ENCODE measurements at regions of chr18 and their contacts with region 1.

Region 1: DNA sequence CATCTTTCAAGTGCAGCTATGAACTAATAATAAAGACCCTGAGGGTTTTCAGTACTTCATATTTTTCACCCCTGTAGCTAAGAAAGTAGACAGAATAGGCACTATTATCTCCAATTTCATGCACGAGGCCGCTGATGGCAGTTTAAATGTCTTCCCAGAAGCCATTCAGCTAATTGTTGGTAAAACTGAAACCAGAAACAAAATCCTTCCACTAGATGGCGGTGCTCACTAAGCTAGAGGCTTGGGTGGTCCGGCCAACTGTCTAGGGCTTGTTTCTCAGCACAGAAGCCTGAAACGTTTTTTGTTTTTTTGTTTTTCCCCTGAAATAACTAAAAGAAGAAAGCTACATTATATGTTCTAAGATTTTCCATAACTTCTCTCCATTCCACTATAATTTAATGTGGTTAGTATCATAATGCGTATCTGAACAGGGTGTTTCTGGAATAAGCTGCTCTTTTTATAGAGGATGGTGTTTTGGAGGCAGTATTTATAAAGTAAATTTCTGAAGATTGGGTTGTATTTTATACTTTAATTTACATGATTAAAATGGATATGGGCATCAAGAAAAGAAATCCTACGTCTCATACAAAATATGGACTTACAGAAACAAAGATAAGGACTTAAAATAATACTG is 159.4 kb downstream of the PIK3C3 start:
- DNase-seq: peak; percentile 70
- H3K4me3 Mint-ChIP-seq: no peak overlapping the region
- H3K27ac Mint-ChIP-seq: peak overlapping the region; percentile 83
- H3K4me1 Mint-ChIP-seq: peaks cover 27% of the 10 kb centered on the region
- H3K27me3 Mint-ChIP-seq: no peaks in the 10 kb centered on the region
- CTCF ChIP-seq: peak; percentile 78

Region 2: GRCh38 chr18:42274488-42275137 is 160.2 kb after region 1 on chr18:
- CTCF ChIA-PET with region 1: no interaction called
- intact Hi-C with region 1: loop called (anchors 2 kb)
- DNase-seq: no peak
- H3K4me3 Mint-ChIP-seq: no peak overlapping the region
- H3K27ac Mint-ChIP-seq: no peak overlapping the region
- H3K4me1 Mint-ChIP-seq: no peaks in the 10 kb centered on the region
- H3K27me3 Mint-ChIP-seq: no peaks in the 10 kb centered on the region
- CTCF ChIP-seq: no peak

Region 3: DNA sequence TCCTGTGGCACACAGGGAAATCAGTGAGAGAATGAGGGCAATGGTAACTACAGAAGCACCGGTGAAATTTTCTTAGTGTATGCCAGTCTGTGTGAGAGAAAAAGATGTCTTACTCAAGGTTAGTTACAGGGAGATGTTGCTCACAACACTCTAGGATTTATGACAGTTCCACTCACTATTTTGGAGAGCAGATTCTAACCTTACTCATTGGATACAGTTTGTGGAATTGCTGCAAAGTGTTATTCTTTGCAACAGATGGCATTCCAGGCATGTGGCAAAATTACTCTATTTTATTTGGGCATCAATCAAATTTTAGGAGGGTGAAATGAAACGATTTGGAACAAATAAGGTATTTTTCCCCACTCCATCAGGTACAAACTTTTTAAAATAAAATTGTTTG is 289.7 kb after region 1 on chr18:
- CTCF ChIA-PET with region 1: no interaction called
- intact Hi-C with region 1: no loop called
- DNase-seq: no peak
- H3K4me3 Mint-ChIP-seq: no peak overlapping the region
- H3K27ac Mint-ChIP-seq: no peak overlapping the region
- H3K4me1 Mint-ChIP-seq: no peaks in the 10 kb centered on the region
- H3K27me3 Mint-ChIP-seq: no peaks in the 10 kb centered on the region
- CTCF ChIP-seq: no peak

Region 4: GRCh38 chr18:43271593-43272432 is 1157.4 kb after region 1 on chr18:
- CTCF ChIA-PET with region 1: interaction called, 5 read pairs
- intact Hi-C with region 1: loop called (anchors 1 kb)
- DNase-seq: peak; percentile 46
- H3K4me3 Mint-ChIP-seq: no peak overlapping the region
- H3K27ac Mint-ChIP-seq: no peak overlapping the region
- H3K4me1 Mint-ChIP-seq: no peaks in the 10 kb centered on the region
- H3K27me3 Mint-ChIP-seq: peaks cover 13% of the 10 kb centered on the region
- CTCF ChIP-seq: peak; percentile 57

Region 5: DNA sequence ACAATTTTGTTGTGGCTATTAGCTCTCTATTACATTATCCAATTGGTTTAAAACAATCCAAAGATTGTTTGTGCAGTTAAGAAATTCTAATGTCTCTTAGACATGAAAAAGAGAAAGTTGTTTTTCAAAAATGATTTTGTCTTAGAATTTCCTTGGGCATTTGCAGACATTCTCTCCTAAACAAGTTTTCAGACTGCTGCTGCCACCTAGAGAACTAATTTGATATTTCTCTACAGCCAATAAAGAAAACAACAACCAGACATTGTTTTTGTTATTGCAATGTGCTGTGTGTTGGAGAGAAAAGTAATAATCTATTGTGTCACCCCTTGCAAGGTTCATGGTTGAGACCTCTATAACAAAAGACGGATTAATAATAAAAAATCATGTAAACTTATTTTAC is 1281.8 kb after region 1 on chr18:
- CTCF ChIA-PET with region 1: no interaction called
- intact Hi-C with region 1: loop called (anchors 1 kb)
- DNase-seq: no peak
- H3K4me3 Mint-ChIP-seq: no peak overlapping the region
- H3K27ac Mint-ChIP-seq: no peak overlapping the region
- H3K4me1 Mint-ChIP-seq: no peaks in the 10 kb centered on the region
- H3K27me3 Mint-ChIP-seq: no peaks in the 10 kb centered on the region
- CTCF ChIP-seq: no peak

Region 6: GRCh38 chr18:43563780-43564179 is 1449.4 kb after region 1 on chr18:
- CTCF ChIA-PET with region 1: no interaction called
- intact Hi-C with region 1: loop called (anchors 10 kb)
- DNase-seq: peak; percentile 51
- H3K4me3 Mint-ChIP-seq: no peak overlapping the region
- H3K27ac Mint-ChIP-seq: no peak overlapping the region
- H3K4me1 Mint-ChIP-seq: peaks cover 10% of the 10 kb centered on the region
- H3K27me3 Mint-ChIP-seq: peaks cover 19% of the 10 kb centered on the region
- CTCF ChIP-seq: peak; percentile 47

Measured in Calu3 (cell line).